ENCODE measurements at regions of chr6 and their contacts with region 1.

Region 1: DNA sequence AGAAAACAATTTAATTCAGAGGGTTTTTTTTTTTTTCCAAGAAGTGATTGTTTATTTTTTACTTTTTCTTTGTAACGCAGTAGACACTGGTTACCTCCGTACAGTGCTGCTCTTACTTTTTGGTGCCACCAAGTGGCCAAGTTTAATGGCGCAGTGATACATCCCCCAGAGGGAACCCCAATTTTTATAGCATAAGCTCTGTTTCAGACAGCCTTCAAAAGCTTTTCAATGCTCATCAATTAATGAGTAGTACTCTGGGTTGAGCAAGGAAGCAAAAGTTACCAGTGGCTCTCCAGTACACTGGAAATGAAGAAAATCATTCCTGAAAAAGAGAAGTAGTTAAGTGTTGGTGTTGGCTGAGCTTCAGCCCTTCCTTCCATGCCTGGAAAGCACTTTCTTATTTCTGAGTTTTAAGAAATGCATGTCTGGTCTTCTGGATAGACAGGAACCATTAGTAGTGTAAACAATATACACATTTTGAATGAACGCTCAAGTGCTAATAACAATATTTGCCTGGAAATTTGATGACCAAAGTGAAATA is 129.1 kb upstream of the SMLR1 start:
- DNase-seq: peak; percentile 85
- ATAC-seq: peak; percentile 99
- H3K4me3 Mint-ChIP-seq: no peak overlapping the region
- H3K27ac Mint-ChIP-seq: peak overlapping the region; percentile 80
- H3K4me1 Mint-ChIP-seq: peaks cover 56% of the 10 kb centered on the region
- H3K27me3 Mint-ChIP-seq: no peaks in the 10 kb centered on the region

Region 2: DNA sequence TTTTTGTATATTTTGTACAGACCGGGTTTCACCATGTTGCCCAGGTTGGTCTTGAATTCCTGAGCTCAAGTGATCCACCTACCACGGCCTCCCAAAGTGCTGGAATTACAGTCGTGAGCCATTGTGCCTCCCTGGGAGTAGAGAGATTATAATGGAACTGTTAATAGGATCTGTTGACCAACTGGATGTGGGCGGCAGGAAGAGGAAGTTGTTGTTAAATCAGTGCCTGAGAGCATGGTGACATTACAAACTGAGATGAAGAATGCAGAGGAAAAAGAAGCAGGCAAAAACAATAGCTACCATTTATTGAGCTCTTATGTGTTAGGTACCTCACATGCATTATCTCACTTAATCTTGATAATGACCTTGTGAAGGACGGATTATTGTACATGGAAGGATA is 688.9 kb before region 1 on chr6:
- CTCF ChIA-PET with region 1: no interaction called
- POLR2A ChIA-PET with region 1: no interaction called
- DNase-seq: no peak
- ATAC-seq: no peak
- H3K4me3 Mint-ChIP-seq: no peak overlapping the region
- H3K27ac Mint-ChIP-seq: no peak overlapping the region
- H3K4me1 Mint-ChIP-seq: peaks cover 3% of the 10 kb centered on the region
- H3K27me3 Mint-ChIP-seq: peaks cover 10% of the 10 kb centered on the region

Region 3: DNA sequence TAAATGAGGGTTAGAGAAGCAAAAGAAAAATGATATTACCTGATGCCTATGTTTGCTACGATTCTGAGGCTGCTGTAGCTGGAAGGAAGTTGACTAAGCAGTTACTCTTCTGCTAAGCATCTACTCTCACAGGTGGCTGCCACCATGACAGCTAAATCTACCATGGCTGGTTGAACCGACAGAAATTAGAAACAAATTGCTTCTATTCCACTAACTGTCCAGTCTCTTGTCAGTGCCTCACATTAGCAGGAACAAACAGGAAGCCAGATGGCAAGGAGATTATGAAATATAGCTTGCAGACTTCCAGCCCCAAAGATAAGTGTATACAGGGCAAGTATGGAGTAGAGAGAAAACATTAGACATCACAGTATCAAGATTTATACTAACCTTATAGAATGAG is 391.7 kb before region 1 on chr6:
- CTCF ChIA-PET with region 1: interaction called, 10 read pairs
- POLR2A ChIA-PET with region 1: no interaction called
- DNase-seq: no peak
- ATAC-seq: no peak
- H3K4me3 Mint-ChIP-seq: no peak overlapping the region
- H3K27ac Mint-ChIP-seq: no peak overlapping the region
- H3K4me1 Mint-ChIP-seq: peaks cover 10% of the 10 kb centered on the region
- H3K27me3 Mint-ChIP-seq: no peaks in the 10 kb centered on the region

Region 4: GRCh38 chr6:130322673-130323268 is 375.3 kb before region 1 on chr6:
- CTCF ChIA-PET with region 1: interaction called, 55 read pairs
- POLR2A ChIA-PET with region 1: interaction called, 3 read pairs
- DNase-seq: peak; percentile 71
- ATAC-seq: no peak
- H3K4me3 Mint-ChIP-seq: no peak overlapping the region
- H3K27ac Mint-ChIP-seq: no peak overlapping the region
- H3K4me1 Mint-ChIP-seq: peaks cover 15% of the 10 kb centered on the region
- H3K27me3 Mint-ChIP-seq: peaks cover 11% of the 10 kb centered on the region

Region 5: DNA sequence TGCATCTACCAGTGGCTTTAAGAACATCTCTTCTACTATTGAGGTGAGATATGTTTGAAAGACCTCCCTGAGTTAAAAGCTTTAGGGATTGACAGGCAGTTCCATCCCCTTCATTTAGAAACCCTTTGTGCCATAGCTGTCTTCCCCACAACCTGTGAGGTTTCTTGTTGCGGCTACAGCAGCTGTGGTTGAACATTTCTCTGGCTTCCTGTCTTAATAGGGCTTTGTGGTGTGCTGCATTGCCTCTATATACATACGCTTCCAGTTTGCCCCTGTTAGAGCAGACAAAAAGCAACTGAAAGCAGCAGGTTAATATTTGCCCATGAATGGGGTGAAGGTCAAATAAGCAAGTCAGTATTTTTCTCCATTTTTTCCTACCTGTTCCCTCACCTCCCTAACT is 122.1 kb before region 1 on chr6:
- CTCF ChIA-PET with region 1: interaction called, 12 read pairs
- POLR2A ChIA-PET with region 1: interaction called, 3 read pairs
- DNase-seq: peak; percentile 90
- ATAC-seq: peak; percentile 95
- H3K4me3 Mint-ChIP-seq: peak overlapping the region; percentile 62
- H3K27ac Mint-ChIP-seq: peak overlapping the region; percentile 92
- H3K4me1 Mint-ChIP-seq: peaks cover 54% of the 10 kb centered on the region
- H3K27me3 Mint-ChIP-seq: no peaks in the 10 kb centered on the region

Region 6: GRCh38 chr6:130724089-130724488 is 26.0 kb after region 1 on chr6:
- CTCF ChIA-PET with region 1: interaction called, 15 read pairs
- POLR2A ChIA-PET with region 1: no interaction called
- DNase-seq: peak; percentile 33
- ATAC-seq: peak; percentile 79
- H3K4me3 Mint-ChIP-seq: no peak overlapping the region
- H3K27ac Mint-ChIP-seq: peak overlapping the region; percentile 44
- H3K4me1 Mint-ChIP-seq: peaks cover 35% of the 10 kb centered on the region
- H3K27me3 Mint-ChIP-seq: no peaks in the 10 kb centered on the region

Region 7: GRCh38 chr6:130913120-130913519 is 215.1 kb after region 1 on chr6:
- CTCF ChIA-PET with region 1: no interaction called
- POLR2A ChIA-PET with region 1: no interaction called
- DNase-seq: peak; percentile 53
- ATAC-seq: peak; percentile 93
- H3K4me3 Mint-ChIP-seq: no peak overlapping the region
- H3K27ac Mint-ChIP-seq: no peak overlapping the region
- H3K4me1 Mint-ChIP-seq: peaks cover 10% of the 10 kb centered on the region
- H3K27me3 Mint-ChIP-seq: peaks cover 2% of the 10 kb centered on the region